Uterus (tissue), 4 donors: ENCODE measurements at regions of chr6 and their contacts with region 1.

Region 1: DNA sequence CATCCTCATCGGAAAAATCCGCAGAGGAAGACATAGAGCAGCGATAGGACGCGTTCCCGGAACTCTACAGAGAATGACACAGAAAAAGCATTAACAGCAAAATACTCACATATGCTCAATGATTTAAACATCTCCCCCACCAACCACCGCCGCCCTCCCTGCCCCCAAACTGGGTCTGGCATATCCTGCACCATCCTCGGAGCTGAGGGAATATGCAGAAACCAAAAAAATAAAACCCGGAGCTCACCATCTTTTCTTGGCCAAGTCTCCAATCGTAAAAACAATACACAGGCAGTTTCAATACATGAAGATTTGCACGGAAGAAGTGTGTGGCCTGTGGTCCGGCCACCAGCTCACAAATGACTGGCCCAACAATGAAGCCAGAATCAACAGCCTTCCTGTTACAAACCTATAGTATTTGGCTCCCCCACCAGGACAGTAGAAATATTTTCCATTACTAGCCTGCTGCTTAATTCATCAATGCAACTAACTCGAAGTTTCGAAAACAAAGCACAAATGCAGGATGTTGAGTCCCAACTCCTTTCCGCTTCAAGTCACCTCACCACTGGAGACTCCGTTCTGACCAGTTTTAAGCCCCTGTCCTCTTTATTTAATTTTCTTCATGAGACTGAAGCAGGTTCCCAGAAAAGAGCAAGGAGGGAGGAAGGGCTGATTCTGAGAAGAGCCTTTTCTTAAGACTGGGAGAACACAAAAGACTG is 103.2 kb upstream of the BEND6 start:
- DNase-seq: peak; percentile 40 to 57
- H3K4me3 ChIP-seq: peak overlapping the region; percentile 40 to 50
- H3K27ac ChIP-seq: peak overlapping the region; percentile 40 to 55
- H3K4me1 ChIP-seq: no peaks in the 10 kb centered on the region
- H3K27me3 ChIP-seq: no peaks in the 10 kb centered on the region
- CTCF ChIP-seq: peak; percentile 51 to 80 (median 72)
- POLR2A ChIP-seq: no peak

Region 2: GRCh38 chr6:56637640-56638039 is 214.1 kb before region 1 on chr6:
- intact Hi-C with region 1: loop called (anchors 10 kb)
- DNase-seq: no peak
- H3K4me3 ChIP-seq: no peak overlapping the region
- H3K27ac ChIP-seq: no peak overlapping the region
- H3K4me1 ChIP-seq: no peaks in the 10 kb centered on the region
- H3K27me3 ChIP-seq: no peaks in the 10 kb centered on the region
- CTCF ChIP-seq: peak; percentile 61 to 77 (median 68)
- POLR2A ChIP-seq: no peak

Region 3: DNA sequence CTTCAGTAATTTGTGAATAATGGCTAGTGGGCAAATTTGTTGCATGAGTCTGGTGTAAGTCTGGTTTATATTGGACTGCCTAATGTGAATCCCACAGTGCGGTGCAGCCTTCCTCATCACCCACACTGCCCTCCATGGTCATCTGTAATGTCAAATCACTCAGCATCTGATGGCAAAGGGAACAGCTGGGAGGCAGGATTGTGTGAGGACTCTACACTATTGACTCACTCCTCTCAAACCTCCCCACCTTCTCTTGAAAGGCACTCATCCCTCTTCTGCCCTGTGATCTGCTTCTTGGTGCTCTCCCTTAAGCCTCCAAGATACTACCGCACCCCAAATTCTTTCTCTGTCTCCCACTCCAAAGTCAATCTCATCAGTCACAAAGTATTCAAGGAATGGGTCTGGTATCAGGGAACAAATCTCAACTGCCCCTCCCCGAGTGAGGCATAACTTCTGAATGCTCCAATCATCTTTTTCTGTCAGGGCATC is 42.8 kb before region 1 on chr6:
- intact Hi-C with region 1: no loop called
- DNase-seq: no peak
- H3K4me3 ChIP-seq: no peak overlapping the region
- H3K27ac ChIP-seq: no peak overlapping the region
- H3K4me1 ChIP-seq: no peaks in the 10 kb centered on the region
- H3K27me3 ChIP-seq: no peaks in the 10 kb centered on the region
- CTCF ChIP-seq: no peak
- POLR2A ChIP-seq: no peak